Transverse colon (tissue), 4 donors: ENCODE measurements at regions of chr7 and their contacts with region 1.

Region 1: GRCh38 chr7:126040114-126041045 is 1110.8 kb upstream of the POT1 start:
- DNase-seq: no peak
- H3K4me3 ChIP-seq: no peak overlapping the region
- H3K27ac ChIP-seq: no peak overlapping the region
- H3K4me1 ChIP-seq: no peaks in the 10 kb centered on the region
- H3K27me3 ChIP-seq: no peaks in the 10 kb centered on the region
- CTCF ChIP-seq: no peak
- EP300 ChIP-seq: no peak
- POLR2A ChIP-seq: no peak

Region 2: GRCh38 chr7:124747072-124747471 is 1293.3 kb before region 1 on chr7:
- in situ Hi-C with region 1: no loop called
- intact Hi-C with region 1: no loop called
- DNase-seq: no peak
- H3K4me3 ChIP-seq: no peak overlapping the region
- H3K27ac ChIP-seq: no peak overlapping the region
- H3K4me1 ChIP-seq: no peaks in the 10 kb centered on the region
- H3K27me3 ChIP-seq: no peaks in the 10 kb centered on the region
- CTCF ChIP-seq: no peak
- EP300 ChIP-seq: no peak
- POLR2A ChIP-seq: no peak

Region 3: DNA sequence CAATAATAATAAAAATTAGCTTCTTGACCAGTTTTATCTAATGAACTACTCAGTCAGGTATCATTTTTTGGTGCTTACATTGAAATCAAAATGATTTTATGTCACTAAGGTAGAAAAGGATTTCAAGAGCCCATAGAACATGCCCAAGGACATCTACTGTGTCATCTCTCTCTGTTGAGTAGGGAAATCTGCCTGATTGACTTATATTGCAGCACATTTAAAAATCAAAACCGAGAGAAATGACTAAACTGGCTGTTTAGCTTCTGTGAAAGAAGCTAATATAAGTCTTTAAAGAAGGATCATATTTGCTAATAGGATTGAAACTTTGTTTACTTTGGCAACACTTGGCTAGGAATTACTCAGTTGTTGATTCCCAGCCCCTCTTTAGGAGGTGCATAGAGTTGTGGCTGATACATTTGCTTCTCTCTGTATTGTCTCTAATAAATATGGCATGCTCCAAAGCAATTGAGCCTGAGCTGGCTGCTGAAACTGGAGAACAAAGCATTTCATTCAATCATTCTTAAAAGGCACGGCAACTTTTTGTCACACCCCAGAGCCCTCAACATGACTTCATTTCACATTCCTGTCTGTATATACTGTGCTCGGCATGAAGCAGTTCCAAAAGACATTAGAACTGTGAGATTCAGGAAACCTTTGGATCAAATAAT is 13.8 kb before region 1 on chr7:
- in situ Hi-C with region 1: no loop called
- intact Hi-C with region 1: loop called (anchors 1 kb)
- DNase-seq: no peak
- H3K4me3 ChIP-seq: no peak overlapping the region
- H3K27ac ChIP-seq: no peak overlapping the region
- H3K4me1 ChIP-seq: no peaks in the 10 kb centered on the region
- H3K27me3 ChIP-seq: no peaks in the 10 kb centered on the region
- CTCF ChIP-seq: no peak
- EP300 ChIP-seq: no peak
- POLR2A ChIP-seq: no peak